Esophagus muscularis mucosa (tissue), 4 donors: ENCODE measurements at regions of chr19 and their contacts with region 1.

Region 1: DNA sequence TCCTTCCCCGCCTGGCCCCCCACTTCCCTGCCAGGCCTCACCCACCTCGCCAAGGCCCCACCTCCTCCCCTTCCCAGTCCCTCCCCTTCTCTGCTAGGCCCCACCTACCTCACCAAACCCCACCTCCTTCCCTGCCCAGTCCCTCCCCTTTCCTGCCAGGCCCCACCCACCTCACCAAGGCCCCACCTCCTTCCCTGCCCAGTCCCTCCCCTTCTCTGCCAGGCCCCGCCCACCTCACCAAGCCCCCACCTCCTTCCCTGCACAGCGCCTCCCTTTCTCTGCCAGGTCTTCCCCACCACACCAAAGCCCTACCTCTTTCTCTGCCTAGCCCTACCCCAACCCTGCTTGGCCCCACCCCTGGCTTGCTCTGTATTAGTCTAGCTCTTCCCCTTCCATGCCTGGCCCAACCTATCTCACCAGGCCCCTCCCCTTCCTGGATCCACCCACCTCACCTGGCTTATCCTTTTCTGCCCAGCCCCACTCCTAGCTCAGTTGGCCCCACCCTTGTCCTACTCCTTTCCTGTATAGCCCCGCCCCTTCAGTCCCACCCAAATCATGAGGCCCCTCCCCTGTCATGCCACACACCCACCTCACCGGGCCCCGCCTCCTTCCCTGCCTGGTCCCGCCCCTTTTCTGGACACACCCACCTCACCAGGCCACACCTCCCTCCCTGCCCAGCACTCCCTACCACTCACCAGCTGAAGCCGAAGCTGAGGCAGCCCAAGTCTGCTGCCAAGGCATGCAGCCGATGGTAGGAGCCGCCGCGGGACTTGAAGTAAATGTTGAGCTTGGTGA is 16.2 kb downstream of the CERS1 start:
- DNase-seq: no peak
- H3K4me3 ChIP-seq: no peak overlapping the region
- H3K27ac ChIP-seq: no peak overlapping the region
- H3K4me1 ChIP-seq: no peaks in the 10 kb centered on the region
- H3K27me3 ChIP-seq: no peaks in the 10 kb centered on the region
- CTCF ChIP-seq: no peak
- EP300 ChIP-seq: no peak
- POLR2A ChIP-seq: no peak

Region 2: GRCh38 chr19:18999896-19000620 is 120.3 kb after region 1 on chr19:
- intact Hi-C with region 1: loop called (anchors 10 kb)
- DNase-seq: no peak
- H3K4me3 ChIP-seq: no peak overlapping the region
- H3K27ac ChIP-seq: no peak overlapping the region
- H3K4me1 ChIP-seq: peaks cover 0 to 23% (median 15%) of the 10 kb centered on the region in 4 donors
- H3K27me3 ChIP-seq: no peaks in the 10 kb centered on the region
- CTCF ChIP-seq: peak in 1 of 3 experiments; percentile 5
- EP300 ChIP-seq: no peak
- POLR2A ChIP-seq: no peak

Region 3: GRCh38 chr19:19155495-19156219 is 275.9 kb after region 1 on chr19:
- intact Hi-C with region 1: no loop called
- DNase-seq: no peak
- H3K4me3 ChIP-seq: no peak overlapping the region
- H3K27ac ChIP-seq: no peak overlapping the region
- H3K4me1 ChIP-seq: no peaks in the 10 kb centered on the region
- H3K27me3 ChIP-seq: peaks cover 0 to 3% (median 0%) of the 10 kb centered on the region in 4 donors
- CTCF ChIP-seq: no peak
- EP300 ChIP-seq: no peak
- POLR2A ChIP-seq: no peak